ENCODE measurements at regions of chr15 and their contacts with region 1.

Region 1: DNA sequence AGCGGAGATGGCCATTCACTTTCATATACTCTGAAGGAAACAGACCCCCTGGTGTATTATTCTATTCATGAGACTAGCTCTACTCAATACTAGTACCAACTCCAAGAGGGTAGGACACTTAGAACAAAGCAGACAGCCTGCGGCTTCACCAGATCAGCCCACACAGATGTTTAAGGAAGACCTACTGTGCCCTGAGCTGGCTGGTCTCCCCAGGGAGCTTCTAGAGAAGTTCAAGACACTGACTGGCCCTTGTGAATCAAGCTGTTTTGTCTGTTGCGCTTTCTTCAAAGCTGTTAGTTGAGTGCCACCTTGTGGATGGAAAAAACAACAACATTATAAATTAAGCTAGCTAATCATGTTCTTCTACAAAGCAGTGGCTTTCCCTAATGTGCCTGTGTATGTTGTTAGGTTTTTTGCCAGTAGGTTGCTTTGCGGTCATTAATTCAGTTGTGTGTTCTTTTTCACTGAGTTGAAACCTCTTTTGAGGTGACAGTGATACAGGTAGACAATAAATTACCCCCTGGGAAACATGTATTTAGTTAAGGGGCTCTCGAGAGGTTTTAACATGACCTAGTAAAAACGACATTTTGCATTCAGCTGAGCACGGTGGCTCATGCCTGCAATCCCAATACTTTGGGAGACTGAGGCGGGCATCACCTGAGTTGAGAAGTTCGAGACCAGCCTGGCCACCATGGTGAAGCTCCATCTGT is 64.2 kb upstream of the MYZAP start:
- DNase-seq: no peak
- H3K4me3 ChIP-seq: no peak overlapping the region
- H3K27ac ChIP-seq: no peak overlapping the region
- H3K4me1 ChIP-seq: peaks cover 8% of the 10 kb centered on the region
- H3K27me3 ChIP-seq: no peaks in the 10 kb centered on the region
- CTCF ChIP-seq: peak; percentile 75

Region 2: DNA sequence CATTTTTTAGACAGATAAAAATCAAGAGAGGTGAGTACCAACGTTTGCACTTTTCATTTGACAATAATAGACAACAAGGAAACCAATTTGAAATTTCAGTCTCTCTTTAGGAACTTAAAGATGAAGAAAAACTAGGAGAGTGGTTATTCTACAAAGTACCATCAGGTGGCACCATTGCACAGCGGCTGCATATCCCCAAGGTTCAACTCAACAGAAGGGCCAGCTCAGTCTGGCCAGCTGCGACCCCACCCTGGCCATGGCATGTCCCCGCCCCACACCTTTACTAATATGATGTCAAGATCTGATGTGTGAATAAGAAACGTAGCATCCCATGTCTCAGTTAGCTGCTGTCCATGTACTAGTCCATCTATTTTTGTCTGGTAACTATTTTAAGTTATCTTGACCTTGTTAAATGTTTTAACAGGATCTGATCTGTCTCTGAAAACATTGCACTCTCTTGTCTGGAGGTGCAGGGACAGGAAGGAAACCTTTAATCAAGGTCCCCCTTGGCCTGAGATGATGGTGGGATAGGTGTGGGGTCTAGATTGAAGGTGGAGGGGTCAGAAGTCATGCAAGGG is 186.8 kb before region 1 on chr15:
- intact Hi-C with region 1: loop called (anchors 2 kb)
- DNase-seq: no peak
- H3K4me3 ChIP-seq: no peak overlapping the region
- H3K27ac ChIP-seq: no peak overlapping the region
- H3K4me1 ChIP-seq: peaks cover 23% of the 10 kb centered on the region
- H3K27me3 ChIP-seq: no peaks in the 10 kb centered on the region
- CTCF ChIP-seq: peak; percentile 94

Measured in left ventricle myocardium inferior (tissue), 1 donor.